CD8-positive, alpha-beta T cell (primary cell): ENCODE measurements at regions of chr2 and their contacts with region 1.

Region 1: DNA sequence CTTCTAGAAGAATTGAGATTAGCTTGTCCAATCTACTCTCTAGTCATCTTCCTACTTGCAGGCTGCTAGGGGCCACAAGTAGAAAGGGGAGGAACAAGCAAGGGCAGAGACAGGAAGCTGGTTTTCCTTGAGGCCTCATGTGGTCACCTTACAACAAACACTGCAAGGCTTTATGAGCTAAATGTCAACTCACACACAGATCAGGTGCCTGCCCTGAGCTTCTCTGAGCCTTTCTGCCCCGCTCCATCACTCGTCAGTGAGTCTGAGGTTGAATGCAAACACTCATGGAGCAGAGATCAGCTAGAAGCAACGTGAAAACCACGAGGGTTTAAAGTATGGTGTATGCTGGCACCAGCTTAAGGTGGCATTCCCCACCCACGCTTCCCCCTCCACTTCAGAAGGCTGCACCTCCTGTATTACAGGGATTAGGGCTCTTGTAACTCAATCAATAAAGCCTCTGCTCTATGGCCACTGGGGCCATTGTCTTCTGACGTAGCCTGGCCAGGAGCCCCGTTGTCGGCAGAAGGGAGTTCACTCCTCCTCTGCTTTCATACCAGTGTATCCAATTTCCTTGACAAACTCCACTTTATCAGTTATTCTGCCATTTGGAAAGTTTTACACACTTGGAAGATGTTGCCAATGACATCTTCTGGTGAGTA is 5.4 kb upstream of the CRYGC start:
- DNase-seq: peak in 1 of 9 experiments; percentile 33
- ATAC-seq: peak; percentile 29
- H3K4me3 ChIP-seq: no peak overlapping the region
- H3K4me3 Mint-ChIP-seq: no peak overlapping the region
- H3K27ac ChIP-seq: no peak overlapping the region
- H3K27ac Mint-ChIP-seq: no peak overlapping the region
- H3K4me1 ChIP-seq: peaks cover 13% of the 10 kb centered on the region
- H3K4me1 Mint-ChIP-seq: peaks cover 8% of the 10 kb centered on the region
- H3K27me3 ChIP-seq: no peaks in the 10 kb centered on the region
- H3K27me3 Mint-ChIP-seq: no peaks in the 10 kb centered on the region
- CTCF ChIP-seq: no peak

Region 2: GRCh38 chr2:207867056-207867455 is 268.0 kb before region 1 on chr2:
- CTCF ChIA-PET with region 1: no interaction called
- POLR2A ChIA-PET with region 1: no interaction called
- intact Hi-C with region 1: no loop called
- DNase-seq: no peak
- ATAC-seq: no peak
- H3K4me3 ChIP-seq: no peak overlapping the region
- H3K4me3 Mint-ChIP-seq: no peak overlapping the region
- H3K27ac ChIP-seq: no peak overlapping the region
- H3K27ac Mint-ChIP-seq: no peak overlapping the region
- H3K4me1 ChIP-seq: no peaks in the 10 kb centered on the region
- H3K4me1 Mint-ChIP-seq: no peaks in the 10 kb centered on the region
- H3K27me3 ChIP-seq: no peaks in the 10 kb centered on the region
- H3K27me3 Mint-ChIP-seq: no peaks in the 10 kb centered on the region
- CTCF ChIP-seq: no peak

Region 3: DNA sequence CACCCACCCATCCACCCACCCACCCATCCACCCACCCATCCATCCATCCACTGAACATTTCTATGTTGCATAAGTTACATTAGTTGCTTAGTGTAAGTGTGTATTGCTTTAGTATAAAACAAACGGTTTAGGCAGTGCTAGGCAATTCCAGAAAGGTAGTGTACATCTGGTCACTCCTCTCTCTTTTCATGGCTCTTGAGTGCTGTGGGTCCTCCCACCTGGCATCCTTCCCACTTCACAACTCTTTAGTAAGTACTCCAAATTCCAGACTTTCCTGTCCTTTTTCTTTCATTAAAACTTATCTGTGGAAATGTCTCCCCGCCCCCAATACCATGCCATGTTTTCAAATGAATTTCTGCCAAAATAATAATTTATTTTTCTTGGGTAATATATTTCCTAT is 232.2 kb before region 1 on chr2:
- CTCF ChIA-PET with region 1: no interaction called
- POLR2A ChIA-PET with region 1: no interaction called
- intact Hi-C with region 1: no loop called
- DNase-seq: no peak
- ATAC-seq: no peak
- H3K4me3 ChIP-seq: no peak overlapping the region
- H3K4me3 Mint-ChIP-seq: no peak overlapping the region
- H3K27ac ChIP-seq: no peak overlapping the region
- H3K27ac Mint-ChIP-seq: no peak overlapping the region
- H3K4me1 ChIP-seq: no peaks in the 10 kb centered on the region
- H3K4me1 Mint-ChIP-seq: no peaks in the 10 kb centered on the region
- H3K27me3 ChIP-seq: no peaks in the 10 kb centered on the region
- H3K27me3 Mint-ChIP-seq: no peaks in the 10 kb centered on the region
- CTCF ChIP-seq: no peak

Region 4: GRCh38 chr2:208156439-208156838 is 21.4 kb after region 1 on chr2:
- CTCF ChIA-PET with region 1: no interaction called
- POLR2A ChIA-PET with region 1: no interaction called
- intact Hi-C with region 1: loop called in 1 of 2 experiments (anchors 1 kb)
- DNase-seq: no peak
- ATAC-seq: no peak
- H3K4me3 ChIP-seq: no peak overlapping the region
- H3K4me3 Mint-ChIP-seq: no peak overlapping the region
- H3K27ac ChIP-seq: no peak overlapping the region
- H3K27ac Mint-ChIP-seq: no peak overlapping the region
- H3K4me1 ChIP-seq: no peaks in the 10 kb centered on the region
- H3K4me1 Mint-ChIP-seq: no peaks in the 10 kb centered on the region
- H3K27me3 ChIP-seq: no peaks in the 10 kb centered on the region
- H3K27me3 Mint-ChIP-seq: peaks cover 3% of the 10 kb centered on the region
- CTCF ChIP-seq: no peak

Region 5: DNA sequence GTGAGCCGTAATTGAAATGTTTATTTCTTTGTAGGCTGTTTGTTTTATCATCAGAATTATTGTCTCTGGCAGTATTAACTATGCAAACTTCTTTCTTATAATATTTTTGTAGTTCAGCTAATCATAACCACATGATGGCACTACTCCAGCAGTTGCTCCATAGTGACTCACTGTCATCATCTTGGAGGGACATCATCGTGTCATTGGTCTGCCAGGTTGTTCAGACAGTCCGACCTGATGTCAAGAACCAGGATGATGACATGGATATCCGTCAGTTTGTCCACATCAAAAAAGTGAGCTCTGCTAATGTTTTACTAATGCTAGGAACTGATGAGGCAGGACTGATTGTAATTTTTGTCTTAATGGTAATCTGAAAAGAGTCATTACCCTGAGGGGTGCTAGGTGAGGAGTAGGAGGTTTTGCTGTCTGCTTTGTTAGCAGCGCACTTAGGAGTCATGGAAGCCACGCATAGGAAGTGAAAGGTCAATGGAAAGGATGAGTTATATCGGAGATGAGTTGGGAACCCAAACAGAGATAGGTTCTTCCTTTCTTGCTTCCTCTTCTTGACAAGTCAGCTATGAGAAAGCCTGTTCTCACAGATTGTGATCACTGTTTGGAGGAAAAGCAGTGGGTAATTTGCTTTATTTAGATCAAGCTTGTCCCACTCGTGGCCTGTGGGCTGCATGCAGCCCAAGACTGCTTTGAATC is 180.2 kb after region 1 on chr2:
- CTCF ChIA-PET with region 1: no interaction called
- POLR2A ChIA-PET with region 1: no interaction called
- intact Hi-C with region 1: no loop called
- DNase-seq: no peak
- ATAC-seq: no peak
- H3K4me3 ChIP-seq: no peak overlapping the region
- H3K4me3 Mint-ChIP-seq: no peak overlapping the region
- H3K27ac ChIP-seq: no peak overlapping the region
- H3K27ac Mint-ChIP-seq: peak overlapping the region; percentile 5
- H3K4me1 ChIP-seq: no peaks in the 10 kb centered on the region
- H3K4me1 Mint-ChIP-seq: peaks cover 2% of the 10 kb centered on the region
- H3K27me3 ChIP-seq: no peaks in the 10 kb centered on the region
- H3K27me3 Mint-ChIP-seq: no peaks in the 10 kb centered on the region
- CTCF ChIP-seq: no peak